Activated CD4-positive, alpha-beta memory T cell treated with anti-CD3 and anti-CD28 coated beads for 36 hours (primary cell): ENCODE measurements at regions of chr3 and their contacts with region 1.

Region 1: DNA sequence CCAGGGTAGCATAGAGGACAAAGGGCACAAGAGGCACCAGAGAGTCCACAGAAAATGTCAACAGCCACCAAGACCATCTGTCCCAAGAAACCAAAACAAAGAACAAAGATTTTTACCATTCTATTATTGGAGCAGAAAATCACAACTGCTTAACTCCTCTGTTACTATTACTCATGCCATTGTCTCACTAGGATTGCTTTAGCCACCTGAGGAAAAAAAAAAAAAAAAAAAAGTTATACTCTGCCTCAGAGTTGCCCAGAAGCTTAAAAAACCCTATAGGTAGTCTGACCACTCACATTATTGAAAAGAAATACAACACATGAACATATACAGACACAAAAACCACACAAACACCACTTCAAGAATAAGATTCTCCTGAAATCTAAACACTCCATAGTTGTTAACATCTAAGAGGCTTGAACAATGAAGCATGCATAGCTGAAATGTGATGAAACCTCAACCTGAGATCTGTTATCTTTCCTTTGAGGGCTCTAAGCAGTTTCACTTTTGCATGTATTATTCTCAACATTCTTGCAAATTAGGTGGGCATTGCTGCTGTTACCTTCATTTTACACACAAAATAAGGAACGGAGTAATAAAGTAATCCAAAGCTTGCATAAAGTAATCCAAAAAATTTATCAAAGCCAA is 85.4 kb downstream of the IGSF11 start:
- DNase-seq: no peak
- H3K4me3 Mint-ChIP-seq: no peak overlapping the region
- H3K27ac Mint-ChIP-seq: peak overlapping the region; percentile 57
- H3K4me1 Mint-ChIP-seq: peaks cover 28% of the 10 kb centered on the region
- H3K27me3 Mint-ChIP-seq: no peaks in the 10 kb centered on the region

Region 2: DNA sequence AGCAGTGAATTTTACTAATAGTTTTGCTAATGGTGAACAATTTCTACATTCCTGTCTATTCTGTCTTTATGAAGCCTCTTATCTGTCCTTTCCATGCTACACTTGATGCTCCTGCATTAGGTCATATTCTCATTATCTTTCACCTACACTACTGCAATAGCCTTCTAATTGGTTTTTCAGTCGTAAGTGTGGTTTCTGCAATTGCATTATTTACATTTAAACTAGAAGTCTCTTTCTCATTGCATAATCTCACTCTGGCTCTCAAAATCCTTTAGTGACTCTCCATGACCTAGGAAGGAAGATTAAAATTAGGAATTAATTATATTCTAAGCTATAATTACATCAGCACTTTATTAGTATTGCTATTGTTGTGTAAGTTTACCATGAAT is 601.1 kb before region 1 on chr3:
- CTCF ChIA-PET with region 1: no interaction called
- POLR2A ChIA-PET with region 1: no interaction called
- intact Hi-C with region 1: no loop called
- DNase-seq: no peak
- H3K4me3 Mint-ChIP-seq: no peak overlapping the region
- H3K27ac Mint-ChIP-seq: no peak overlapping the region
- H3K4me1 Mint-ChIP-seq: no peaks in the 10 kb centered on the region
- H3K27me3 Mint-ChIP-seq: no peaks in the 10 kb centered on the region

Region 3: DNA sequence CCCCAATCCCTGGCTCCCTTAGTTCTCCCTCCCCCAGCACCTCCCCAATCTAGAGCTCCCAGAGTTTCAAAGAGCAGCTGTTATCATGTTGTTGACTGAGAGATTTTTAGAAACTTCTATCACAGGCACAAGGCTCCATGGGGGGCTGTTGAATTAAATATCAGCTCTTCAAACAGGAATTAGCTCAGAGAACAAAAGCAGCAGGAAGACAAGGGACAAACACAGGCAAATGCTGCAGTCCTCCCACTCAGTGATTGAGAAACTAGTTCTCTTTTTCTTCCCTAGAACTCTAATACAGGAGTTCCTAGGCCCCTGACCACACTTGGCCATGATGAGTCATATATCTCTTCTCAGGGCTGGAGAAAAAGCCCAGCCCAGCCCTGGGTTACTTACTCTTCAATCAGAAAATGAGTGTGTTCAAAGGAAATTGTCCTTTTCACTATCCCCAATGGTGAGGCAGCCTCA is 176.7 kb before region 1 on chr3:
- CTCF ChIA-PET with region 1: no interaction called
- POLR2A ChIA-PET with region 1: no interaction called
- intact Hi-C with region 1: no loop called
- DNase-seq: peak; percentile 9
- H3K4me3 Mint-ChIP-seq: no peak overlapping the region
- H3K27ac Mint-ChIP-seq: no peak overlapping the region
- H3K4me1 Mint-ChIP-seq: no peaks in the 10 kb centered on the region
- H3K27me3 Mint-ChIP-seq: no peaks in the 10 kb centered on the region

Region 4: DNA sequence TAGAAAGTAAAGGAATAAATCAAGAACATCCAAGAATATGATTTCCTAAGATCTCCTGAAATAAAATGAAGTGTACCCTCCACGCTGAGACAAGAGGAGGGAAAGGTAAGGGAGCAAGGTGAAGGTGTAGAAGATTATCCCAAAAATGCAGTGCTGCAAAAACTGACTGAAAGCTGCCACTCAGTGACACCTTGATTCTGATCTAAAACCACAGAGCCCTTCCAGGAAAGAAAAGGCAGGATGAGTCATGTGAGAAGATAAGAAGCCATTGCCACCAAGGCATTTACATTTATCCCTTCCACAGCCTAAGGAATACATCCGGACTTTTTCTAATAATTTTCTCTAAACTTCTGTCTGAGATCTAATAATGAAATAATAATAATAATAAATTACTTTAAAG is 35.5 kb after region 1 on chr3:
- CTCF ChIA-PET with region 1: no interaction called
- POLR2A ChIA-PET with region 1: no interaction called
- intact Hi-C with region 1: loop called (anchors 5 kb)
- DNase-seq: no peak
- H3K4me3 Mint-ChIP-seq: no peak overlapping the region
- H3K27ac Mint-ChIP-seq: no peak overlapping the region
- H3K4me1 Mint-ChIP-seq: peaks cover 11% of the 10 kb centered on the region
- H3K27me3 Mint-ChIP-seq: no peaks in the 10 kb centered on the region